Right cardiac atrium (tissue), 5 donors: ENCODE measurements at regions of chr1 and their contacts with region 1.

Region 1: GRCh38 chr1:114716304-114717170 is at the start of gene NRAS:
- DNase-seq: peak; percentile 96 to 98 (median 97)
- ATAC-seq: peak; percentile 99 to 100
- H3K4me3 ChIP-seq: peak within 1 kb of the TSS; percentile 97
- H3K27ac ChIP-seq: peak within 1 kb of the TSS; percentile 96
- H3K4me1 ChIP-seq: peaks cover 2% of the 10 kb centered on the region
- H3K27me3 ChIP-seq: no peaks in the 10 kb centered on the region
- total RNA-seq, gene NRAS: 7.3 to 12.8 (median 8.9) TPM

Region 2: GRCh38 chr1:114757455-114758250 is 41.1 kb after region 1 on chr1 and contains the start of gene CSDE1:
- intact Hi-C with region 1: loop called in 1 of 4 experiments (anchors 5 kb)
- DNase-seq: peak; percentile 98
- ATAC-seq: peak; percentile 97 to 98
- H3K4me3 ChIP-seq: peak within 1 kb of the TSS; percentile 85
- H3K27ac ChIP-seq: peak within 1 kb of the TSS; percentile 99
- H3K4me1 ChIP-seq: peaks cover 4% of the 10 kb centered on the region
- H3K27me3 ChIP-seq: no peaks in the 10 kb centered on the region
- total RNA-seq, gene CSDE1: 699 to 819 (median 772) TPM